Head of caudate nucleus (tissue), 42 donors: ENCODE measurements at regions of chr2 and their contacts with region 1.

Region 1: GRCh38 chr2:88691339-88692183 is at the start of gene RPIA:
- DNase-seq: peak; percentile 98 to 100 (median 99)

Region 2: DNA sequence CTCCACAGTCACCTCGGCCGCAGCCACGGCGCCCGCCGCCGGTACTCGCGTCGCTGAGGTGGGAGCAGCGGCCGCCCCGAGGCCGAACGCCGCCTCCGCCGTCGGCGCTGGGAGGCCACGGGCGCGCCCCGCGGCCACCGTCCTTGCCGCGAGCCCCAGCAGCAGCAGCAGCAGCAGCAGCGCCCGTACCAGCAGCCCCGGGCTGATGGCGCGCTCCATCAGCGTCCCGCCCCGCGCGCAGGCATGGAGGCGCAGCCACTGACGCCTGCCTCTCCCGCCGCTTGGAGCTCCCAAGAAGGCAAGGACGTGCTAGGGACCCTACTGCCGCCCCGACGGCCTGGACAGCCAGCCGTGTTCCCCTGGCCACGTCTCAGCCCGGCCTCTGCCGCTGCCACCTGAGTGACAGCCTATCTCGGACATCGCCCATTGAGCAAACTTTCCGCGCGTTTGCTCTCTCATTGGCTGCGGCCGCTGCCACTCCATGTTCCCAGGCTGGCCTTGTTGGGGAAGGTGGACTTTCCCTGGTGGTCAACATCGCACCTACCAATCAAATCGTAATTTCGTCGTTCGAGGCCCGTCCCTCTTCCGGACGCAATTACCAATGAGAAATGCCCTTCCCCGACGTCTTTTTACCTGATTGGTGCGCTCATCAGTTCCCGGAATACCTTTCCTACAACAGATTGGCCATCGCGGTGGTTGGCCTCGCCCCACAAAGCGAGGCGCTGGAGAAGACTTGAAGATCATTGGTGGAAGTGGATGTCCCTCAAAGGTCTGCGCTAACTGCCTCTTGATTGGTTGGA is 64.3 kb before region 1 on chr2 and contains the start of gene EIF2AK3:
- intact Hi-C with region 1: loop called (anchors 5 kb)
- DNase-seq: peak; percentile 95 to 100 (median 99)

Region 3: DNA sequence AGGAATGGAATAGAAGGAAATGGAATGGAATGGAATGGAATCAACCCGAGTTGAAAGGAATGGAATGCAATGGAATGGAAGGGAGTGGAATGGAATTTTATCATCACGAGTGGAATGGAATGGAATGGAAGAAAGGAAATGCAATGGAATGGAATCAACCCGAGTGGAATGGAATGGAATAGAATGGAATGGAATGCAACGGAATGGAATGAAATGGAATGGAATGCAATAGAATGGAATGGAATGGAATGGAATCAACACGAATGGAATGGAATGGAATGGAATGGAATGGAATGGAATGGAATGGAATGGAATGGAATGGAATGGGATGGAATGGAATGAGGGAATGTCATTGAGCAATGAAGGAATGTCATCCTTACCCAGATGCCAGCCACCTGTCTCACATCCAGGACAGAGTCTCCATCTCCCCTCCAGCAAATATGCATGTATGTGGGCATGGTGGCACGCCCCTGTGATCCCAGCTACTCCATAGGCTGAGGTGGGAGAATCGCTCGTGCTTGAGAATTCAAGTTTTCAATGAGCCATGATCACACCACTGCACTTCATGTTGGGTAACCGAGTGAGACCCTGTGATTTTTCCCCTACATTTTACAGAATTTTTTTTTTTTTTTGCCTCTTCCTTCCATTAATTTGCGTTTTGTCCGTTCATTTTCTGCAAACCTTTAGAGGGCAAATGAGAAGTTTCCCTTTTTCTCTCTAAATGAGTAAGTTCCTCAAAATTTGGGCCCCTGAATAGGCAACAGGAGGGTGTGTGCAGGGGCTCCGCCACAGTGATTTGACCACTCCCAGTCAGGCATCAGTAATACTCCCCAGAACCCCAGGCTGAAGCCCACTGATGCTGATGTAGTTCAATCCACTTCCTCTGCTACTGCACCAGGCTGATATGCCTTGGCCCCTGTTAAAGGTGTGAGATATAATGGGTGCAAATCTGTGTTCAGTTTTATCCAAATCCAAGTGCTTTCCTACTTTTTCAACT is 1149.6 kb after region 1 on chr2:
- intact Hi-C with region 1: no loop called
- DNase-seq: no peak